Transverse colon (tissue), 4 donors: ENCODE measurements at regions of chr6 and their contacts with region 1.

Region 1: GRCh38 chr6:89242574-89243330 is 25.6 kb upstream of the GABRR1 start:
- DNase-seq: peak; percentile 12
- H3K4me3 ChIP-seq: no peak overlapping the region
- H3K27ac ChIP-seq: no peak overlapping the region
- H3K4me1 ChIP-seq: no peaks in the 10 kb centered on the region
- H3K27me3 ChIP-seq: no peaks in the 10 kb centered on the region
- CTCF ChIP-seq: peak; percentile 45 to 68 (median 50)
- EP300 ChIP-seq: no peak
- POLR2A ChIP-seq: no peak

Region 2: DNA sequence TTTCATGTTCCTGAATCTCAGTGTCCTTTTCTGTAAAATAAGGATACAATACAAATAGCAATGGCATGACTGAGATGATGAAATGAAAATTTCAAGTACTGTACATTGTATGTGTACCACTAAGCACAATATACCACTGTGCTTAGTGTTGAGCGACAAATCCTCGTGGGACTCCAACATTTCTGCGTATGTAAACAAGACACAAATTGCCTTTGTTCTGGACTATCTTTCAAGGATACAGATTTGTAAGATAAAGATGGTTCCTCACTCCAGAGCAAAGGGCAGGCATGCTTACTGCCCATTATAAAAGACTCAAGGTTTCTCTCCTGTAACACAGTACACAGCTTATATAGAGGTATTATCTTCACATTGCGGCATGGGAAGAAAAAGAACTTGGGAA is 1658.9 kb before region 1 on chr6:
- in situ Hi-C with region 1: no loop called
- intact Hi-C with region 1: no loop called
- DNase-seq: no peak
- H3K4me3 ChIP-seq: no peak overlapping the region
- H3K27ac ChIP-seq: no peak overlapping the region
- H3K4me1 ChIP-seq: peaks cover 6 to 27% (median 15%) of the 10 kb centered on the region in 4 donors
- H3K27me3 ChIP-seq: no peaks in the 10 kb centered on the region
- CTCF ChIP-seq: no peak
- EP300 ChIP-seq: no peak
- POLR2A ChIP-seq: no peak

Region 3: GRCh38 chr6:89122625-89123024 is 120.1 kb before region 1 on chr6:
- in situ Hi-C with region 1: loop called in 2 of 4 experiments (anchors 10 to 25 kb)
- intact Hi-C with region 1: loop called (anchors 5 kb)
- DNase-seq: no peak
- H3K4me3 ChIP-seq: no peak overlapping the region
- H3K27ac ChIP-seq: no peak overlapping the region
- H3K4me1 ChIP-seq: peaks cover 0 to 16% (median 3%) of the 10 kb centered on the region in 4 donors
- H3K27me3 ChIP-seq: peaks cover 3% of the 10 kb centered on the region
- CTCF ChIP-seq: peak in 4 of 5 experiments; percentile 39 to 51 (median 46)
- EP300 ChIP-seq: no peak
- POLR2A ChIP-seq: no peak

Region 4: DNA sequence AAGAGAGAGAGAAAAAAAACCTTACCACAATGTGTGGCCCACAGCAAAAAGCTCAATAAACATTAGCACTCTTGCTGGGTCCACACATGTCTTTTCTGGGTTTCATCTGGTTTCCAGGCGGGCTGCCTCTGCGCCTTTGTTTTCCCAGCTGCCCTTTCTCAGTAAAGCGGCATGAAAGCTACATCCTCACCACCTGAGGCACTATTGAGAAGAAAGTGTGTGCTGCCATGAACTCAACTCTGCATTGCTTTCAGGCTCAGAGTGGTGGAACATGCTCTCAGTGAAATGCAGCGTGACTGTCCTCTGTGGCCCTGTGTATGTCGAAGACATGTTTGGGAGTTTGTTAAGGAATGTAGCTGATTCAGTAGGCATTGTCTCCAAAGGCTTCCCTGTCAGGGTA is 293.5 kb after region 1 on chr6:
- in situ Hi-C with region 1: no loop called
- intact Hi-C with region 1: no loop called
- DNase-seq: no peak
- H3K4me3 ChIP-seq: no peak overlapping the region
- H3K27ac ChIP-seq: no peak overlapping the region
- H3K4me1 ChIP-seq: no peaks in the 10 kb centered on the region
- H3K27me3 ChIP-seq: no peaks in the 10 kb centered on the region
- CTCF ChIP-seq: no peak
- EP300 ChIP-seq: no peak
- POLR2A ChIP-seq: no peak

Region 5: GRCh38 chr6:89562118-89562973 is 319.6 kb after region 1 on chr6:
- in situ Hi-C with region 1: no loop called
- intact Hi-C with region 1: no loop called
- DNase-seq: no peak
- H3K4me3 ChIP-seq: no peak overlapping the region
- H3K27ac ChIP-seq: no peak overlapping the region
- H3K4me1 ChIP-seq: no peaks in the 10 kb centered on the region
- H3K27me3 ChIP-seq: no peaks in the 10 kb centered on the region
- CTCF ChIP-seq: no peak
- EP300 ChIP-seq: no peak
- POLR2A ChIP-seq: no peak